GM12878 (cell line): ENCODE measurements at regions of chr12 and their contacts with region 1.

Region 1: DNA sequence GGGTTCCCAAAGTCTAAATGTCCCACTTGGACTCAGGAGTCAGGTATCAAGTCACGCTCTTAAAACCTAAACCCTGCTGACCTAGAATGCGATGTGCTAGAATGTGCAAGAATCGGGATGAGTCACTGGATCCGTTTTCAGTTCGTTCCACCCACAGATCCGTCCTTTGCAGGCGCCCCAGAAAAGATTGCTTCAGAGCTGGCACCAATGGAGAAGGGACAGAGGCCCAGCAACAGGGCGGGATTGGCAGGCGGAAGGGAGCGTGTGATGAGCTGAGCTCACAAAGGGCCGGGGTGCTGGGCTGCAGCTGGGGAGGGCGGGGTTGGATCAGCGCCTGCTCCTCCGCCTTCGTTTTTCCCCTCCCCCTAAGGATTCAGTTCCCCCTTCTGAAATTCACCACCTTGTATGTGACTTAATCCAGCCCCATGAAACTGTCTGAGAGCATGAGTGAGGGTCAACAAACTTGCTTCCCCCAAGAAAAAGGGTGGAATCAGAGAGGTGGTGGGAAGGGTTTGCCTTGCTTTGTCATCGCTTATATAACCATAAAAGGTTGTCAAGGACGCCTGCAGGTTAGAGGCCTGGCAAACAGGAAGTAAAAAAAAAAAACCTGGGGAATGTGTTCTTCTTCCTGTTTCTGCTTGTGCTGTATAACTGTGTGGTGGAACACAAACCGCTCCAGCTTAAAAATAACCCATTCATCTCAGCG is 2.8 kb upstream of the UBC start:
- DNase-seq: peak; percentile 98
- ATAC-seq: peak; percentile 71
- H3K4me3 ChIP-seq: peak overlapping the region; percentile 97
- H3K27ac ChIP-seq: peak overlapping the region; percentile 100
- H3K4me1 ChIP-seq: peaks cover 35% of the 10 kb centered on the region
- H3K27me3 ChIP-seq: no peaks in the 10 kb centered on the region
- CTCF ChIP-seq: no peak
- EP300 ChIP-seq: peak; percentile 75 to 93
- POLR2A ChIP-seq: peak; percentile 76
- RAD21 ChIP-seq: no peak

Region 2: GRCh38 chr12:124125203-124125871 is 792.0 kb before region 1 on chr12:
- CTCF ChIA-PET with region 1: no interaction called
- POLR2A ChIA-PET with region 1: no interaction called
- RAD21 ChIA-PET with region 1: no interaction called
- SMC1A ChIA-PET with region 1: no interaction called
- in situ Hi-C with region 1: no loop called
- intact Hi-C with region 1: loop called (anchors 10 kb)
- DNase-seq: peak; percentile 72
- ATAC-seq: peak; percentile 93
- H3K4me3 ChIP-seq: no peak overlapping the region
- H3K27ac ChIP-seq: peak overlapping the region; percentile 7
- H3K4me1 ChIP-seq: peaks cover 35% of the 10 kb centered on the region
- H3K27me3 ChIP-seq: no peaks in the 10 kb centered on the region
- CTCF ChIP-seq: no peak
- EP300 ChIP-seq: peak; percentile 58 to 82; a peak in 2 of 4 replicates
- POLR2A ChIP-seq: no peak
- RAD21 ChIP-seq: 0 out of 2 replicates have a peak, but pooled peaks have one; percentile 3

Region 3: GRCh38 chr12:124527861-124528561 is 389.3 kb before region 1 on chr12:
- CTCF ChIA-PET with region 1: no interaction called
- POLR2A ChIA-PET with region 1: no interaction called
- RAD21 ChIA-PET with region 1: no interaction called
- SMC1A ChIA-PET with region 1: no interaction called
- in situ Hi-C with region 1: no loop called
- intact Hi-C with region 1: no loop called
- DNase-seq: no peak
- ATAC-seq: no peak
- H3K4me3 ChIP-seq: no peak overlapping the region
- H3K27ac ChIP-seq: no peak overlapping the region
- H3K4me1 ChIP-seq: peaks cover 5% of the 10 kb centered on the region
- H3K27me3 ChIP-seq: no peaks in the 10 kb centered on the region
- CTCF ChIP-seq: no peak
- EP300 ChIP-seq: no peak
- POLR2A ChIP-seq: no peak
- RAD21 ChIP-seq: no peak

Region 4: GRCh38 chr12:124567661-124568373 is 349.5 kb before region 1 on chr12:
- CTCF ChIA-PET with region 1: no interaction called
- POLR2A ChIA-PET with region 1: no interaction called
- RAD21 ChIA-PET with region 1: no interaction called
- SMC1A ChIA-PET with region 1: no interaction called
- in situ Hi-C with region 1: no loop called
- intact Hi-C with region 1: loop called (anchors 10 kb)
- DNase-seq: no peak
- ATAC-seq: peak; percentile 70
- H3K4me3 ChIP-seq: peak overlapping the region; percentile 95
- H3K27ac ChIP-seq: peak overlapping the region; percentile 82
- H3K4me1 ChIP-seq: peaks cover 25% of the 10 kb centered on the region
- H3K27me3 ChIP-seq: no peaks in the 10 kb centered on the region
- CTCF ChIP-seq: peak in 1 of 3 experiments; percentile 14; a peak in 2 of 6 replicates
- EP300 ChIP-seq: no peak
- POLR2A ChIP-seq: peak; percentile 57
- RAD21 ChIP-seq: no peak

Region 5: GRCh38 chr12:124898200-124898922 is 18.9 kb before region 1 on chr12:
- CTCF ChIA-PET with region 1: interaction called, 9 read pairs
- POLR2A ChIA-PET with region 1: interaction called, 46 read pairs
- RAD21 ChIA-PET with region 1: interaction called, 51 read pairs
- SMC1A ChIA-PET with region 1: interaction called, 22 read pairs
- in situ Hi-C with region 1: no loop called
- intact Hi-C with region 1: no loop called
- DNase-seq: no peak
- ATAC-seq: peak; percentile 74
- H3K4me3 ChIP-seq: no peak overlapping the region; the same call in 1 of the 2 replicates
- H3K27ac ChIP-seq: peak overlapping the region; percentile 27
- H3K4me1 ChIP-seq: peaks cover 32% of the 10 kb centered on the region
- H3K27me3 ChIP-seq: no peaks in the 10 kb centered on the region
- CTCF ChIP-seq: peak; percentile 72 to 81 (median 78)
- EP300 ChIP-seq: no peak
- POLR2A ChIP-seq: no peak
- RAD21 ChIP-seq: peak; percentile 60

Region 6: GRCh38 chr12:124927201-124928094 is 10.2 kb after region 1 on chr12:
- CTCF ChIA-PET with region 1: interaction called, 6 read pairs
- POLR2A ChIA-PET with region 1: interaction called, 57 read pairs
- RAD21 ChIA-PET with region 1: interaction called, 9 read pairs
- SMC1A ChIA-PET with region 1: interaction called, 16 read pairs
- in situ Hi-C with region 1: no loop called
- intact Hi-C with region 1: no loop called
- DNase-seq: peak; percentile 90
- ATAC-seq: peak; percentile 85
- H3K4me3 ChIP-seq: peak overlapping the region; percentile 80
- H3K27ac ChIP-seq: peak overlapping the region; percentile 90
- H3K4me1 ChIP-seq: peaks cover 11% of the 10 kb centered on the region
- H3K27me3 ChIP-seq: no peaks in the 10 kb centered on the region
- CTCF ChIP-seq: no peak
- EP300 ChIP-seq: peak in 1 of 2 experiments; percentile 68; a peak in 1 of 4 replicates
- POLR2A ChIP-seq: no peak
- RAD21 ChIP-seq: no peak

Region 7: DNA sequence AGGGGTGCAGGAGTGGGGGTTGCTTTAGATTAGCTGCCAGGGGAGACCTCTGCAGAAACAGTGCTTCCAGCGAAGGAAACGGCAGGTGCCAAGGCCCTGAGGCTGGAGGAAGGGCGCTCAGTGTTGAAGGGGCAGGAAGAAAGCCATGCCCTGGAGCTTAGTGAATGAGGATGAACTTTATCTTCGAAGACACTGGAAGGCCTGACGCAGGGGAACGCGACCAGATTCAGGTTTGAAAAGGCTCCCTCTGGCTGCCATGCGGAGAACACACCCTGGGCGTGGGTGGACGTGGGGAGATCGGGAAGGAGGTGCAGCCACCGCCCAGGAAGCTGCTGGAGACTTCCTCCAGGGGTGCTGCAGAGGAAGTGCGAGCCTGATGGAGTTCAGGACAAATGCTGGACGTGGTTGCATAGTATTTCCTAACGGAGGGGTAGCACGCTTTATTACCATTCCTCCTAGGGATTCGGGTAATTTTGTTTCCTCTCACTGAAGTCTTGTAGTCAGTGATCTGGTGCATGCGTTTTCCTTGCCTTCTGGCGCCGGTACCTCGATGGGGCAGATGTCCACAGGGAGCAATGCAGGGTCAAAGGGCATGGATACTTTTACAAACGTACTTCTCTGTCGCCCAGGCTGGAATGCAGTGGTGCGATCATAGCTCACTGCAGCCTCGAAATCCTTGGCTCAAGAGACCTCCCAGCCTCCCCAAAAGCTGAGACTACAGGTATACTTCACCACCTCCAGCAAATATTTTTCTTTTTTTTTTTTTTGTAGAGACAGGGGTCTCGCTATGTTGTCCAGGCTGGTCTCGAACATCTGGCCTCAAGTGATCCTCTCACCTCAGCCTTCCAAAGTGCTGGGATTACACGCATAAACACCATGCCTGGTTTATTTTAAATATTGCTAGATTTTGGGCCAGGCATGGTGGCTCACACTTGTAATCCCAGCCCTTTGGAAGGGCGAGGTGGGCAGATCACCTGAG is 23.6 kb after region 1 on chr12:
- CTCF ChIA-PET with region 1: interaction called, 523 read pairs
- POLR2A ChIA-PET with region 1: interaction called, 346 read pairs
- RAD21 ChIA-PET with region 1: interaction called, 246 read pairs
- SMC1A ChIA-PET with region 1: interaction called, 294 read pairs
- in situ Hi-C with region 1: no loop called
- intact Hi-C with region 1: loop called (anchors 1 kb)
- DNase-seq: peak; percentile 82
- ATAC-seq: peak; percentile 74
- H3K4me3 ChIP-seq: peak overlapping the region; percentile 68
- H3K27ac ChIP-seq: peak overlapping the region; percentile 97
- H3K4me1 ChIP-seq: peaks cover 17% of the 10 kb centered on the region
- H3K27me3 ChIP-seq: no peaks in the 10 kb centered on the region
- CTCF ChIP-seq: peak; percentile 92 to 98 (median 93)
- EP300 ChIP-seq: no peak
- POLR2A ChIP-seq: peak; percentile 68
- RAD21 ChIP-seq: peak; percentile 63

Region 8: DNA sequence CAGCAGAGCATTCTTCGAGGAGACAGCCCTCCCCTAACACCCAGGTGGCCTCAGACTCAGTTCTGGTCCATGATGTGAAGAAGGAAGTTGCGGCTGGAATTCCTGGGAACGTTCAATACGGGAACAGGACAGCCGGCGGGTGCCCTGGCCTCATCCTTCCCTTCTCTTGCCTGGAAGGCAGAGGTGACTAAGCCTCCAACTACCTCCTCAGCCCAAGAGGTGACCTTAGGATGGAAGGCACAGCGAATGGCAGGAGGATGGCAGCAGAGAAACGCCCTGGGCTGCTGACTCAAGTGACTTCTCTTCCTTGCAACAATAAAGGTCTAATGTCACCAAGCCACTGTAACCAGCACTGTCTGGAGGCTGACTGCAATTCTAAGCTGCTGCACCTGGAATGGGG is 35.5 kb after region 1 on chr12:
- CTCF ChIA-PET with region 1: no interaction called
- POLR2A ChIA-PET with region 1: no interaction called
- RAD21 ChIA-PET with region 1: no interaction called
- SMC1A ChIA-PET with region 1: no interaction called
- in situ Hi-C with region 1: no loop called
- intact Hi-C with region 1: no loop called
- DNase-seq: no peak
- ATAC-seq: no peak
- H3K4me3 ChIP-seq: no peak overlapping the region
- H3K27ac ChIP-seq: no peak overlapping the region
- H3K4me1 ChIP-seq: no peaks in the 10 kb centered on the region
- H3K27me3 ChIP-seq: no peaks in the 10 kb centered on the region
- CTCF ChIP-seq: no peak
- EP300 ChIP-seq: no peak
- POLR2A ChIP-seq: no peak; the same call in 1 of the 2 replicates
- RAD21 ChIP-seq: no peak

Region 9: DNA sequence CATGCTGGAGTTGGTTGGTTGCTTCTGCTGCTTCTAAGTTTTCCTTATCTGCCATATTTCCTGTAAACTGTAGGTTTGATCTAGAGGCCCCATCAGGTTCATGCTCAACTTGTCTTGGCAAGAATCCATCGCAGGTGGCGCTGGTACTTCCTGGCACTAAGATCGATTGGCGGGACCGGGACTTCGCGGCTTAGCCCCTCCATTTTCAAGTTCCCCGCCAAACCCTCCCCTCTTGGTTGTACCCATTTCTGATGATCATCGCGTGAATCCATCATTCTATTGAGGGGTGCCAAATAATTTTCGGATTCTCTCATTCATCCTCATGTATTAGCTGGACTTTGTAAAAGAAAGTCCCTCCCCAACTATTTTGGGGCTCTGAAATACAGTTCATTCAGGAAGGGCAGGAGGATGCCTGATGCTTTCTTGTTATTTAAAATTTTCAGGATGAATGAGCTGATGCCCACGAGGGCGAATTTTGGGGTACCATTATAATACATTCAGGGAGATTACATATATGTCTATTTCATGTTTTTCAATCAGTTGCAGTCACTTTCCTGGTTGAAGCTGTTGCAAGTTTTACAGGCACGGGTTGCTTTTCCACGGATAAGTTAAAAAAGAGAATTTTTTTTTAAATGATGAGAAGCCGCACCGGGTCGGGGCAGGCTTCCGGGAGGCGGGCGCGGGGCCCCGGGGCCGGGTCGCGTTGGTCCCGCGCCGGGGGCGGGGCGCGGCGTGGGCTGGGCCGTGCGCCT is 75.8 kb after region 1 on chr12:
- CTCF ChIA-PET with region 1: no interaction called
- POLR2A ChIA-PET with region 1: interaction called, 44 read pairs
- RAD21 ChIA-PET with region 1: interaction called, 13 read pairs
- SMC1A ChIA-PET with region 1: interaction called, 11 read pairs
- in situ Hi-C with region 1: no loop called
- intact Hi-C with region 1: loop called (anchors 2 kb)
- DNase-seq: peak; percentile 69
- ATAC-seq: peak; percentile 61
- H3K4me3 ChIP-seq: peak overlapping the region; percentile 58; the same call in 1 of the 2 replicates
- H3K27ac ChIP-seq: peak overlapping the region; percentile 47
- H3K4me1 ChIP-seq: peaks cover 14% of the 10 kb centered on the region
- H3K27me3 ChIP-seq: no peaks in the 10 kb centered on the region
- CTCF ChIP-seq: peak; percentile 61 to 71 (median 66)
- EP300 ChIP-seq: no peak
- POLR2A ChIP-seq: peak; percentile 34; the same call in 1 of the 2 replicates
- RAD21 ChIP-seq: 0 out of 2 replicates have a peak, but pooled peaks have one; percentile 5